Mammary epithelial cell (primary cell): ENCODE measurements at regions of chr2 and their contacts with region 1.

Region 1: GRCh38 chr2:118122594-118123281 is 34.5 kb downstream of the INSIG2 start:
- DNase-seq: peak; percentile 34
- H3K4me3 ChIP-seq: no peak overlapping the region
- H3K27ac ChIP-seq: peak overlapping the region; percentile 100
- H3K4me1 ChIP-seq: peaks cover 41% of the 10 kb centered on the region
- H3K27me3 ChIP-seq: no peaks in the 10 kb centered on the region
- CTCF ChIP-seq: no peak

Region 2: DNA sequence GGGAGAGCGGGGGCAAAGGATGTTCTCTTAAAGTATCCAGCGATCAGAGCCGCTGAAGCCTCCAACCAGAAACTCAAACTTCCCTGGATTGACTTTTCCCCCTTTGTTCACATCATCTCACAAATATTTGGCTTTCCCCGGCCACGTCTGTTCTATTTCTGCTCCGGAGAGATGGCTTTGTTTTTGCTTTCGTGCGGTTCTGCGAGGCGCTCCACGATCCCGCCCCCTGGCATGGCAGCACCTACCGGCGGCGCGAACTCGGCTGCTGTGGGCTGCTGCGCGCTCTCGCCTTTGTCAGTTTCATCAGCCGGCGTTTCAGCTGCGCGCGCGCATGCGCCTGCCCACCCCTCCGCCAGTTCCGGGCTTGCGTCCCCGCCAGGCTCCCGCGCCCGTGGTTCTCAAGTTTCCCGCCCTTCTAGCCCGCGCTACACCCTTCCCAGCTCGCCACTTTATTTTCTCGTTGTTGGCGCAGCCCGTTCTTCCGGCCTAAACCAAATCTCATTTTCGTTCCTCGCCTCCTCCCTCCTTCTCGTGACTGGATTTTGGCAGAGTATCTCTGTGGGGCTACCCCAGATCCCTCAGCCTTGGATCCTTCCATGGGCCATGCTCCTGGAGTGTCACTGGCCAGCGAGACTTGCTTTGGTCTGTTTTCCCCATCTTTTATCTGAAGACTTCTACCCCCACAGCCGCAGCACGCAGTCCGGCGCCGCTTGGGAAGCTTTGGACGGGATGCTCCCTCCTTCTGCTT is 63.5 kb after region 1 on chr2:
- CTCF ChIA-PET with region 1: no interaction called
- dilution Hi-C with region 1: no loop called
- in situ Hi-C with region 1: no loop called
- intact Hi-C with region 1: loop called (anchors 2 kb)
- DNase-seq: peak; percentile 56
- H3K4me3 ChIP-seq: peak overlapping the region; percentile 46 to 75 (median 59)
- H3K27ac ChIP-seq: peak overlapping the region; percentile 46
- H3K4me1 ChIP-seq: peaks cover 7% of the 10 kb centered on the region
- H3K27me3 ChIP-seq: no peaks in the 10 kb centered on the region
- CTCF ChIP-seq: no peak

Region 3: DNA sequence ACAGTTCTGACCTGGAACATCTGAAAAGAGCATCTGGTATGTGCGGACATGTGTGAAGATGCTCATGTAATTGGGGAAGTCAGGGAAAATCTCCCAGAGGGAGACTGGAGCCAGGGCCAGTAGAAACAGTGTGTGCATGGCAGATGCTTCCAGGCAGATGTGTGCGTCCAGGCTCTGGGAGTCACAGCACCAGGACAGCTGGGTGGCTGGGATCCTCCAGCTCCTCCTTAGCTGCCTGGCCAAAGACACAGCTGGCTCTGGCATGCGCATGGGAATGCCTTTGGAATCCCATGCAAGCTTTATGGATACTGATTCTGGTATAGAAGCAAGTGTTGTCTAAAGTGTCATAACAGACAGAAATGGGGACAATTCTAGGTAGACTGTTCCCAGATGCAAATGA is 335.2 kb after region 1 on chr2:
- CTCF ChIA-PET with region 1: no interaction called
- dilution Hi-C with region 1: no loop called
- in situ Hi-C with region 1: no loop called
- intact Hi-C with region 1: no loop called
- DNase-seq: no peak
- H3K4me3 ChIP-seq: no peak overlapping the region
- H3K27ac ChIP-seq: no peak overlapping the region
- H3K4me1 ChIP-seq: peaks cover 3% of the 10 kb centered on the region
- H3K27me3 ChIP-seq: no peaks in the 10 kb centered on the region
- CTCF ChIP-seq: no peak